Activated CD4-positive, alpha-beta T cell treated with anti-CD3 and anti-CD28 coated beads for 36 hours (primary cell): ENCODE measurements at regions of chr14 and their contacts with region 1.

Region 1: DNA sequence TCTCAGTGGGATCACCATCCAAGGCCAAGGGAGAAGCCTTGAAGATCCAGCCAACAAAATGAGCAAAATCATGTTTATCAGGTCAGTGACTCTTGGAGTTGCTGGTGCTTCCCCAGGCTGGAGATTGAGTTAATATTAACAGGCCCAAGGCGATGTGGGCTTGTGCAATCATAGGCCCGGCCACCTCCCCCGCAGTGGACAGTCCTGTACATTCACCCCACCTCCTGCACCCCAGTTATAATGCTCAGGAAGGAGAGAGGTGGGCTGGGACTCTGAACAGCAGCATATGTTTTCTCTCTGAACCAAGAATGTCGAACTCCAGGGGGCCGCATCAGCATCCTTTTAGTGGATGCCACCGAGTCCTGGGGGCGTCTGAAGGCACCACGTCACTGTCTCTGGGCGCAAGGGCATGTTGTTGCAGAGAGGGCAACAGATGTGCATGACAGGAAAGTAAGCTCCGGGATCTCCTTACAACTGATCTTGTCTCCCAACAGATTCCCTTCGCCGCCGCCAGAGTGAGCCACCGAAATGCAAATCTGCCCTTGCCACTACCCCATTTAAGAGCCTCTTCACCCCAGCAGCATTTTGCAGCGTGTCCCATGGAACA is 32.2 kb upstream of the SERPINA6 start:
- DNase-seq: peak; percentile 65
- ATAC-seq: peak; percentile 16
- H3K4me3 Mint-ChIP-seq: no peak overlapping the region
- H3K27ac Mint-ChIP-seq: peak overlapping the region; percentile 84
- H3K4me1 Mint-ChIP-seq: peaks cover 58% of the 10 kb centered on the region
- H3K27me3 Mint-ChIP-seq: peaks cover 6% of the 10 kb centered on the region

Region 2: GRCh38 chr14:94342334-94342934 is 12.9 kb before region 1 on chr14:
- CTCF ChIA-PET with region 1: interaction called, 3 read pairs
- POLR2A ChIA-PET with region 1: interaction called, 6 read pairs
- intact Hi-C with region 1: loop called in 1 of 2 experiments (anchors 1 kb)
- DNase-seq: peak; percentile 77
- ATAC-seq: peak; percentile 71
- H3K4me3 Mint-ChIP-seq: no peak overlapping the region
- H3K27ac Mint-ChIP-seq: peak overlapping the region; percentile 93
- H3K4me1 Mint-ChIP-seq: peaks cover 79% of the 10 kb centered on the region
- H3K27me3 Mint-ChIP-seq: peaks cover 2% of the 10 kb centered on the region

Region 3: GRCh38 chr14:94412671-94413638 is 57.7 kb after region 1 on chr14:
- CTCF ChIA-PET with region 1: interaction called, 3 read pairs
- POLR2A ChIA-PET with region 1: interaction called, 4 read pairs
- intact Hi-C with region 1: loop called in 1 of 2 experiments (anchors 5 kb)
- DNase-seq: peak; percentile 35
- ATAC-seq: peak; percentile 51
- H3K4me3 Mint-ChIP-seq: no peak overlapping the region
- H3K27ac Mint-ChIP-seq: no peak overlapping the region
- H3K4me1 Mint-ChIP-seq: peaks cover 5% of the 10 kb centered on the region
- H3K27me3 Mint-ChIP-seq: peaks cover 3% of the 10 kb centered on the region

Region 4: DNA sequence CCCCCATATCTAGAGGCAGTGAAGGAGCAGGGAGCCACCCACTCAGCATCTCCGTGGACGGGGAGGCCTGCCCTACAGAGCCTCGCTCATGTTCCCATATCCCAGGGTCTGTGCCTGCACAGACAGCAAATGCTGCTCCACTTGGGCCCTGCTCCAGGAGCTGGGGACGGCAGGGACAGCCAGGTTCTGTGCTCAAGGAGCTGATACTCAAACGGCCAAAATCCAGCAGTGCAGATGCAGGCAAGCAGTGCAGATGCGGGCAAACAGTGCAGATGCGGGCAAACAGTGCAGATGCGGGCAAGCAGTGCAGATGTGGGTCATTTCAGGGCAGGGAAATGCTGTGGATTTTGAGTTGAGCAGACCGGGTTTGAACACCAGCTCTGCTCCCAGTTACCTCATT is 160.1 kb after region 1 on chr14:
- CTCF ChIA-PET with region 1: no interaction called
- POLR2A ChIA-PET with region 1: no interaction called
- intact Hi-C with region 1: no loop called
- DNase-seq: no peak
- ATAC-seq: no peak
- H3K4me3 Mint-ChIP-seq: no peak overlapping the region
- H3K27ac Mint-ChIP-seq: no peak overlapping the region
- H3K4me1 Mint-ChIP-seq: no peaks in the 10 kb centered on the region
- H3K27me3 Mint-ChIP-seq: peaks cover 6% of the 10 kb centered on the region

Region 5: GRCh38 chr14:94548999-94549985 is 194.0 kb after region 1 on chr14:
- CTCF ChIA-PET with region 1: no interaction called
- POLR2A ChIA-PET with region 1: no interaction called
- intact Hi-C with region 1: loop called in 1 of 2 experiments (anchors 1 kb)
- DNase-seq: peak; percentile 84
- ATAC-seq: peak; percentile 74
- H3K4me3 Mint-ChIP-seq: no peak overlapping the region
- H3K27ac Mint-ChIP-seq: no peak overlapping the region
- H3K4me1 Mint-ChIP-seq: no peaks in the 10 kb centered on the region
- H3K27me3 Mint-ChIP-seq: peaks cover 29% of the 10 kb centered on the region

Region 6: GRCh38 chr14:94936401-94936892 is 581.2 kb after region 1 on chr14:
- CTCF ChIA-PET with region 1: no interaction called
- POLR2A ChIA-PET with region 1: no interaction called
- intact Hi-C with region 1: no loop called
- DNase-seq: no peak
- ATAC-seq: no peak
- H3K4me3 Mint-ChIP-seq: no peak overlapping the region
- H3K27ac Mint-ChIP-seq: no peak overlapping the region
- H3K4me1 Mint-ChIP-seq: no peaks in the 10 kb centered on the region
- H3K27me3 Mint-ChIP-seq: no peaks in the 10 kb centered on the region